ENCODE measurements at regions of chr4 and their contacts with region 1.

Region 1: GRCh38 chr4:94152466-94152865 is 55.2 kb upstream of the SMARCAD1 start:
- DNase-seq: no peak
- H3K4me3 ChIP-seq: no peak overlapping the region
- H3K27ac ChIP-seq: no peak overlapping the region
- H3K4me1 ChIP-seq: no peaks in the 10 kb centered on the region
- H3K27me3 ChIP-seq: no peaks in the 10 kb centered on the region
- CTCF ChIP-seq: no peak

Region 2: GRCh38 chr4:94135701-94136100 is 16.8 kb before region 1 on chr4:
- CTCF ChIA-PET with region 1: no interaction called
- POLR2A ChIA-PET with region 1: interaction called, 16 read pairs
- intact Hi-C with region 1: no loop called
- DNase-seq: no peak
- H3K4me3 ChIP-seq: no peak overlapping the region
- H3K27ac ChIP-seq: no peak overlapping the region
- H3K4me1 ChIP-seq: no peaks in the 10 kb centered on the region
- H3K27me3 ChIP-seq: no peaks in the 10 kb centered on the region
- CTCF ChIP-seq: no peak

Measured in PC-9 (cell line).